Activated B cell treated with CpG ODN at 0.5 μM for 24 hours (primary cell): ENCODE measurements at regions of chr19 and their contacts with region 1.

Region 1: DNA sequence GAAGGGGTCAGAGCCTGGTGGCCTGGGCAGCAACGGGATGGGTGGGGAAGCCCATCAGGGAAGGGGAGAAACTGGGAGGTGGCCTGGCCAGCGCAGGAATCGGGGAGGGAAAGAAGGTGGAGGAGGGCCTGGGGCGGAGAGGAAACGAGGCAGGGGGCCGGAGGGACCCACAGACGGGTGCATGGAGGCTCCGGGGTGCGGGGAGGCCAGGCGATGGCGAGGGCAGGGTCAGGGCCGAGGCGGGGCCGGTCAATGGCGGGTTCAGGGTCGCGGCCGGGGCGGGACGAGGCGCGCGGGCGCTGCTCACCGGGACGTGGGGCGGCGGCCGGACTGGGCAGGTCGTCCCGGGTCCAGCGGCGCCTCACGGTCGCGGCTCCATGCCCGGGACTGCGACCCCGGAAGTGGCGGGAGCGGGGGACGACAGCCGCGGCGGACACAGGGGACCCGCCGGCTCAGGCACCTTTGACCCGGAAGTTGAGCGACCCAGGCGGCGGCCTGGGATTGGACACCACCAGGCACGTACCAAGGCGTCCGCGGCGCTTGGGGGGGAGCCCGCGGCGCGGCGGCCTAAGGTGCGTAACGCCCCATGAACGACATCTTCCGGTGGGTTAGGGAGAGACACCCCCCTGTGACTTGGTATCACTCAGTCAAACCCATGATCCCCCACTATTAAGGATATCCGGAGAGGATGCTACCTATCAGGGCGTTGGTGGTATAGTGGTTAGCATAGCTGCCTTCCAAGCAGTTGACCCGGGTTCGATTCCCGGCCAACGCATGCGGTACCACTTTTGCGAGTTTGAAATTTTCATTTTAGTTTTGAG is at the start of gene DPP9:
- DNase-seq: peak; percentile 92
- ATAC-seq: peak; percentile 94
- H3K4me3 Mint-ChIP-seq: peak within 1 kb of the TSS; percentile 98
- H3K27ac Mint-ChIP-seq: peak within 1 kb of the TSS; percentile 98
- H3K4me1 Mint-ChIP-seq: peaks cover 46% of the 10 kb centered on the region
- H3K27me3 Mint-ChIP-seq: peaks cover 7% of the 10 kb centered on the region
- CTCF ChIP-seq: no peak
- total RNA-seq, gene DPP9: 85.7 and 111 TPM in 2 replicates

Region 2: DNA sequence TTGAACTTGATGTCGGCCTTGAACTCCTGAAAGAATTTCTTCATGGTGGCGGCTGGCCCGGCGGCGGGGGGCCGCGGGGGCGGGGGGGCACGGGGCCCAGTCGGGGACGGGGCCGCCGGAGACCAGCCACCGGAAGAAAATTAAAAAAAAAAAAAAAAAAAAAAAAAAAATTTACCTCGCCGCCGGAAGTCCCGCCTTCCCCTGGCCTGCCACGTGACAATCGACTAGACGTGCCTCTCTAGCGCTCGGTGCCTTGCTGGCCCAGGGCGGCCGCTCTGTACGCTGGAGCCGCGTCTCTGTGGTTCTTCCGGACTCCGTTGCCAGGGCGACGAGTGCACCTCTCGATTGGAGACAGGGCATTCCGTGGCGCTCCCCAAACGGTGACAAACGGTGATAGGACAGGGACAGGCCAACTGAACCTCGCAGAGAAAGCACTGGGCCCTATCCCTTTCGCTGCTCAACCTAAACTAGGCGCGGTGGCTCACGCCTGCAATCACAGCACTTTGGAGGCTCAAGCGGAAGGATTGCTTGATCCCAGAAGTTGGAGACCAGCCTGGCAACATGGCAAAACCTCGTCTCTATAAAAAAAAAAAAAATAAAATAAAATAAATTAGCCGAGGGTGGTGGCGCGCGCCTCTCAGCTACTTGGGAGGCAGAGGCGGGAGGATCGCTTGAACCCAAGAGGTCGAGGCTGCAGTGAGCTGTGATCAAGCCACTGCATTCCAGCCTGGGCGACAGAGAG is 265.8 kb before region 1 on chr19 and contains the start of gene UBXN6:
- CTCF ChIA-PET with region 1: no interaction called
- POLR2A ChIA-PET with region 1: no interaction called
- intact Hi-C with region 1: loop called (anchors 5 kb)
- DNase-seq: peak; percentile 95
- ATAC-seq: peak; percentile 95
- H3K4me3 Mint-ChIP-seq: peak within 1 kb of the TSS; percentile 89
- H3K27ac Mint-ChIP-seq: peak within 1 kb of the TSS; percentile 86
- H3K4me1 Mint-ChIP-seq: peaks cover 20% of the 10 kb centered on the region
- H3K27me3 Mint-ChIP-seq: no peaks in the 10 kb centered on the region
- CTCF ChIP-seq: no peak
- total RNA-seq, gene UBXN6: 54.3 and 58.2 TPM in 2 replicates

Region 3: GRCh38 chr19:4669723-4670480 is 53.7 kb before region 1 on chr19 and contains the start of gene MYDGF:
- CTCF ChIA-PET with region 1: no interaction called
- POLR2A ChIA-PET with region 1: interaction called, 6 read pairs
- intact Hi-C with region 1: loop called (anchors 1 kb)
- DNase-seq: peak; percentile 93
- ATAC-seq: peak; percentile 98
- H3K4me3 Mint-ChIP-seq: peak within 1 kb of the TSS; percentile 89
- H3K27ac Mint-ChIP-seq: peak within 1 kb of the TSS; percentile 77
- H3K4me1 Mint-ChIP-seq: peaks cover 18% of the 10 kb centered on the region
- H3K27me3 Mint-ChIP-seq: no peaks in the 10 kb centered on the region
- CTCF ChIP-seq: no peak
- total RNA-seq, gene MYDGF: 30.9 and 31.6 TPM in 2 replicates

Region 4: DNA sequence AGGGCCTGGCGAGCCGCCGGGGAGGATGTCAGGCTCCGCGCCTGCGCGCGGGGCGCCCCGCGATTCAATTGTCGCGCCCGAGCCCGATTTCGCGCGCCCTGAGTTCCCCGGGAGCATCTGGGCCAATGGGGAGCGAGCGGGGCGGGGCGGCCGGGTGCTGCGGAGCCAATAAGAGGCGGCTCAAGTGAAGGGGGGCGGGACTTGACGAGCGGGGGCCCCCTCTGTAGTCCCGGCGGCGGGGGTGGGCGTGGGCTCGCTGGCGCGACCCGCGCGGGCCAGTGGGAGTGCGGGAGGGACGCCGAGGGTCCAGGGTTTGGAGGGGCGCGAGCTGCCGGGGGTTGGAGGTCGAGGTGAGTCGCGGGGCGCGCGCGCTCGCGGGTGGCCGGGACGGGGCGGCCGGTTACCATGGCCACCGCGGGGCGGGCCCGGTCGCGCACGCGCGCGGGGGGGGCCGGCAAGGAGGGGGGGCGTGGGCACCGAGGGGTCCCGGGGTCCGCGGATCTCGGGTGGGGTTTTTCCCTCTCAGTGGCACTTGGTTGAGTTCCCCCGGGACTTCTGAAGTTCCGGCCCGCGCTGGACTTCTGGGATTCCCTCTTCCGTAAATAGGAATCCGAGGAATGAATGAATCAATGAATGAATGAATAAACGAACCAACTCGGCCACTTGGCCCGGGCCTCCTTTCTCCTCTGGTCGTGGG is 186.5 kb after region 1 on chr19:
- CTCF ChIA-PET with region 1: no interaction called
- POLR2A ChIA-PET with region 1: interaction called, 4 read pairs
- intact Hi-C with region 1: loop called (anchors 2 kb)
- DNase-seq: peak; percentile 94
- ATAC-seq: peak; percentile 96
- H3K4me3 Mint-ChIP-seq: peak overlapping the region; percentile 82
- H3K27ac Mint-ChIP-seq: peak overlapping the region; percentile 35
- H3K4me1 Mint-ChIP-seq: peaks cover 56% of the 10 kb centered on the region
- H3K27me3 Mint-ChIP-seq: no peaks in the 10 kb centered on the region
- CTCF ChIP-seq: no peak

Region 5: DNA sequence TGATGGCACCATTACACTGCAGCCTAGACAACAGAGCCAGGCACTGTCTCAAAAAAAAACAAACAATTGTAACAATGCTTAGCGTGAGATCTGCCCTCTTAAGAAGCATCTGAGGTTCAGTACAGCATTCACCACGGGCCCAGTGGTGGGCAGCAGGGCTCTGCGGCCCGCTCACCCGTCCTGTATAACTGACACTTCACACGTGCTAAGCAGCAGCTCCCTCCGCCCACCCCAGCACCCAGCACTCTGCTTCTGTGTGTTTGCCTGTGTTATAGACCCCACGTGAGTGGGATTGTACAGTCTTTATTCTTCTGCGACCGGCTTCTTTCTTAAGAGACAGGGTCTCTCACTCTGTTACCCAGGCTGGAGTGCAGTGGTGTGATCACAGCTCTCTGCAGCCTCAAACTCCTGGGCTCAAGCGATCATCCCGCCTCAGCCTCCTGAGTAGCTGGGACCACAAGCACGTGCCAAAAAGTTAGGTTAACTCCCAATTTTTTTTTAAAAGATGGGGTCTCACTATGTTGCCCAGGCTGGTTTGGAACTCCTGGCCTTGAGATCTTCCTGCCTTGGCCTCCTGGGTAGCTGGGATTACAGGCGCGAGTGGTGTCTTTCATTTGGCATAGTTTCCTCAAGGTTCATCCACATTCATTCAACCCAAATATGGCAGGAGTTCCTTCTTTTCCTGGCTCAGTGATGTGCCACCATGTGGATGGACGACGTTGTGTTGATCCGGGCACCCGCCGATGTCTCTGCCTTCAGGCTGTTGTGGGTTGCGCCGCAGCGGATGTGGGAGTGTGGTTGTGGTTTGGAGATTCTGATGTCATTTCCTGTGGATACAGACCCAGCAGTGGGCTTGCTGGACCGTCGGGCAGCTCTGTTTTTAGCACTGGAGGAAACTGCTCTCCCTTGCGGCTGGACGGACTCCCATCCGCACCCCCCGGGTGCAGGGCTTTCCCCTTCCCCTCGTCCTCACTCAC is 415.3 kb after region 1 on chr19:
- CTCF ChIA-PET with region 1: no interaction called
- POLR2A ChIA-PET with region 1: no interaction called
- intact Hi-C with region 1: loop called (anchors 1 kb)
- DNase-seq: peak; percentile 73
- ATAC-seq: peak; percentile 64
- H3K4me3 Mint-ChIP-seq: peak overlapping the region; percentile 70
- H3K27ac Mint-ChIP-seq: peak overlapping the region; percentile 85
- H3K4me1 Mint-ChIP-seq: peaks cover 86% of the 10 kb centered on the region
- H3K27me3 Mint-ChIP-seq: no peaks in the 10 kb centered on the region
- CTCF ChIP-seq: no peak